Activated B cell treated with CpG ODN at 0.5 μM for 24 hours (primary cell): ENCODE measurements at regions of chr9 and their contacts with region 1.

Region 1: DNA sequence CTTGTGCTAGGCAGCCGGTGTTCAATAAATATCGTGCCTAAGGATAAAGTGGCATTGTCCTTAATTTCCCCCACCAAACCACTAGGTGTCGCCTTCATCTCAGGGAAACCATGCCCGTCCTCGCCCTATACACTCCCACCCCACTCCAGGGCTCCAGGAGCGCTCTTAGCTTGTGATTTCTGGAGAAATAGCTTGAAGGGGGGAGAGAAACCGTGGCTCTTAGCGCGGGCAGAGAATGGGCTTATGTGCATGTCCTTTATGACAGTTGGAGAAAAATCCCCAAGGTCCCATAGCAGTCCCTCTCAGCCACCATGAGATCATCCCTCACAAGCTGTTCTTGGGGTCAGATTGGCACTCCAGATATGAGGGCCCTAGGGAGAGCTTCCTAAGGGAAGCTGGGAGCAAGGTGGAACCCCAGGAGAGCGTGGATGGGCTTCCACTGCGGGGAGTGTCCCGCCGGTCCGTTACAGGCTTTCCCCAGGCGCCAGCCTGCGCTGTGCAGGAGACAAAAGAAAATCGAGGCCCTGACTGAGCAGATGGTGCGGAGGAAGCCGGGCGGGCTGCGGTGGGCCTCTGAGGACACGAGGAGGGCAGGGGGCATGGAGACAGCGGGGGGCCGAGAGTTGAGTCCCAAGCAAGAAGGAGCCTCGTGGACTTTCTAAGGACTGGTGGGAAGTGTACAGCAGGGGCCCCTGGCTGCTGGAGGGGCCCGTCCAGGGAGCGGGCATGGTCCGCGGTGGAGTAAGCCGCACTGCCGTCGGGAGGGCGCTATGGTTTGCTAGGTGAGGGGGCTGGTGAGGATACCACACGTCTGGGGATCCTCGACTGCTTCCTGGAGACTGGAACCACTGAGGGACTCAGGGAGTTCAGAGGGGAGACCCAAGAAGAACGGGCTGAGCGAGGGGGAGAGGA is 750 bp upstream of the NPR2 start:
- DNase-seq: no peak
- ATAC-seq: peak; percentile 92
- H3K4me3 Mint-ChIP-seq: peak overlapping the region; percentile 58
- H3K27ac Mint-ChIP-seq: no peak overlapping the region
- H3K4me1 Mint-ChIP-seq: peaks cover 10% of the 10 kb centered on the region
- H3K27me3 Mint-ChIP-seq: peaks cover 5% of the 10 kb centered on the region
- CTCF ChIP-seq: no peak

Region 2: GRCh38 chr9:35489313-35490154 is 301.1 kb before region 1 on chr9 and contains the start of gene RUSC2:
- CTCF ChIA-PET with region 1: no interaction called
- POLR2A ChIA-PET with region 1: no interaction called
- intact Hi-C with region 1: no loop called
- DNase-seq: peak; percentile 43
- ATAC-seq: peak; percentile 86
- H3K4me3 Mint-ChIP-seq: peak within 1 kb of the TSS; percentile 82
- H3K27ac Mint-ChIP-seq: no peak within 1 kb of the TSS
- H3K4me1 Mint-ChIP-seq: peaks cover 14% of the 10 kb centered on the region
- H3K27me3 Mint-ChIP-seq: peaks cover 30% of the 10 kb centered on the region
- CTCF ChIP-seq: no peak
- total RNA-seq, gene RUSC2: 0.24 and 0.29 TPM in 2 replicates

Region 3: DNA sequence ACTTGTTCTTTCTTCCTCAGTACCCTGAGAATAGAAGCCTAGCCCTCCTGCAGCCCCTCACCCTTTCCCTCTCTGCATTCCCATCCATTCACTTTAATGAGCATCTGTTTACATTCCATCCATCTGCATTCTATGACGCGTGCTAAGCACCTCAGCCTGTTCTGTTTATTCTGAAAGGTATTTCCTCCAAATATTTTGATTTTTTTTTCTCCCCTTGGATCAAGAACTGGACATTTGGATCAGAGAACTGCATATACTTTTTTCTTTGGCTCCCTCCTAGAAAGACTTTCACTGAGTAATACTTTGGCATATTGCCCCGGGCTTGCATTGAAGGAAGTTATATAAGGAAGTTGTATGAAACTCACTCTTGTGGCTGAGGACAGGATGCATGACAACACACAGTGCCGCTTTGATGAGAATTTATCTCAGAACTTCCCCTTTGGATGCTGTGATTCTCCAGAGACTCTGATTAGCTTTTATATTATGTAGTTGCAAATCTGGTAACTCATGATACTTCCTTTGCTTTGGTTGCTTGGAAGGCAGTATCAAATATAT is 54.2 kb after region 1 on chr9:
- CTCF ChIA-PET with region 1: interaction called, 12 read pairs
- POLR2A ChIA-PET with region 1: no interaction called
- intact Hi-C with region 1: no loop called
- DNase-seq: no peak
- ATAC-seq: peak; percentile 80
- H3K4me3 Mint-ChIP-seq: peak overlapping the region; percentile 33
- H3K27ac Mint-ChIP-seq: peak overlapping the region; percentile 28
- H3K4me1 Mint-ChIP-seq: peaks cover 81% of the 10 kb centered on the region
- H3K27me3 Mint-ChIP-seq: no peaks in the 10 kb centered on the region
- CTCF ChIP-seq: no peak

Region 4: GRCh38 chr9:35859310-35859989 is 68.8 kb after region 1 on chr9:
- CTCF ChIA-PET with region 1: interaction called, 10 read pairs
- POLR2A ChIA-PET with region 1: no interaction called
- intact Hi-C with region 1: no loop called
- DNase-seq: no peak
- ATAC-seq: peak; percentile 79
- H3K4me3 Mint-ChIP-seq: no peak overlapping the region
- H3K27ac Mint-ChIP-seq: no peak overlapping the region
- H3K4me1 Mint-ChIP-seq: peaks cover 3% of the 10 kb centered on the region
- H3K27me3 Mint-ChIP-seq: peaks cover 14% of the 10 kb centered on the region
- CTCF ChIP-seq: no peak

Region 5: DNA sequence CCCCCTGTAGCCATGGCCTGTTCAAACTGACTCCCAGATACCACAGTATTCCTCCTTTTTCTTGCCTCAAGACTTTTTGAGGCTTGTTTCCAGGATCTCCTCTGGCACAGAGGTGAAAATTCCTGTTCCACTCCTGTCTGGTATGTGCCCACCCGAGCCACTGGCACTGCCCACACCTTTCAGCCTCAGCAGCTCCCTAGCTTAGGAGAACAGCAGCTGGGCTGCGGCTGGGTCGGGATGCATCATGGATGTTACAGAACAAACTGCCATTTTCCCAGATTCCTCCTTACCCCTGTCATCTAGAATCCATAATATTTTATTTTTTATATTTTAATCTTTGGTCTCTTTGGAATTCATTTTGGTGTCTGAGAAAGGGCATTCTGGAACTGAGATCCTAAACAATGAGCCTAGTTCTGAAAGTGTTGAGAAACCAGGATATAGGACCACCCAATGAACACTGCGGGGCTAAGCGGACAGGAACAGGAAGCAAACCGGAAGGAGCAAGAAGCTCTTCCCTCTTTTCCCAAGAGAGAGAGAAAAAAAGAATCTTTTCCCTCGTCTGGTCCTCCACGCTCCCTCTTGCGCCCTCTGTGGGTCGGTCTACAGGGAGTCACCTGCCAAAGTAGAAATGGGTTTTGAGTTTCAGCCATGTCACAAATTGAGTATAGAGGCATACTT is 154.8 kb after region 1 on chr9:
- CTCF ChIA-PET with region 1: no interaction called
- POLR2A ChIA-PET with region 1: no interaction called
- intact Hi-C with region 1: loop called (anchors 1 kb)
- DNase-seq: peak; percentile 27
- ATAC-seq: peak; percentile 47
- H3K4me3 Mint-ChIP-seq: no peak overlapping the region
- H3K27ac Mint-ChIP-seq: no peak overlapping the region
- H3K4me1 Mint-ChIP-seq: peaks cover 3% of the 10 kb centered on the region
- H3K27me3 Mint-ChIP-seq: peaks cover 21% of the 10 kb centered on the region
- CTCF ChIP-seq: peak; percentile 67